Activated CD4-positive, alpha-beta T cell treated with anti-CD3 and anti-CD28 coated beads for 36 hours (primary cell): ENCODE measurements at regions of chr2 and their contacts with region 1.

Region 1: DNA sequence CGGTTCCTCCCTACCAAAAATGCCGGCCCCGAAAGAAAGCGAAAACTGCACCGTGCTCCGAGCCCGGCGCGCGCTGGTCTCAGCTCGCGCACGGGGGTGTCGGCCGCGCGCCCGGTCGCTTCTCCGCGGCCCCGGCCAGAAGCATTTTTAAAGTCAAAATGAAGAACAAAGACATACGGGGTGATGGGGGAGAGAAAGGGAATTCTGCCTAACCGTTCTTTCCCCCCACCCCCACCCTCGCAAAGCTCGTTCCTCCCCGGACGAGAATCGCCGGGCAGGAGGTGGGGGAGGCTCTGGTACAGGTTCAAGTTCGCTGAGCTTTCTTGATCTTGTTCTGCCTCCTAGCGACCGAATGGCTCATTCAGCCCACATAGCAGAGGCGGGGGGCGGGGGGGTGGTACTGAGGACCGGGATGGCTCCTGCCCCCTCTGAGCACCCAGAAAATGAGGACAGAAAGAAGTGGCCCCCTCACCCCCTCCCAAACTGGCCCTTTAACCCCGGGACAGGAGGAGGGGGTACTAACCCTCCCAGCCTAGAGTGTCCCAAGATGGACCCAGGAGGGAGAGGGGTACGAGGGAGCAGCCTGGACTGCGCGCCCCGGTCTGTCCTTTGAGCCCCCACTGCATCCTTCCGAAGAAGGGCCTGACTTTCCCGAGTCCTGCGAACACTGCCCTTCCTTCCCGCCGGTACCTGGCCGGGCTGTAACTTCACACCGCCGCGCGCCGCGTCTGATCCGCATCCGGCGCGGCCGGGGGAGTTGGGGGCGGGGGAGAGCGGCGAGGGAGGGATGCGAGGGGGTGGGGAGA is 3.1 kb downstream of the BCL11A start:
- DNase-seq: peak; percentile 77
- ATAC-seq: peak; percentile 67
- H3K4me3 Mint-ChIP-seq: peak overlapping the region; percentile 81
- H3K27ac Mint-ChIP-seq: peak overlapping the region; percentile 72
- H3K4me1 Mint-ChIP-seq: peaks cover 33% of the 10 kb centered on the region
- H3K27me3 Mint-ChIP-seq: peaks cover 47% of the 10 kb centered on the region

Region 2: DNA sequence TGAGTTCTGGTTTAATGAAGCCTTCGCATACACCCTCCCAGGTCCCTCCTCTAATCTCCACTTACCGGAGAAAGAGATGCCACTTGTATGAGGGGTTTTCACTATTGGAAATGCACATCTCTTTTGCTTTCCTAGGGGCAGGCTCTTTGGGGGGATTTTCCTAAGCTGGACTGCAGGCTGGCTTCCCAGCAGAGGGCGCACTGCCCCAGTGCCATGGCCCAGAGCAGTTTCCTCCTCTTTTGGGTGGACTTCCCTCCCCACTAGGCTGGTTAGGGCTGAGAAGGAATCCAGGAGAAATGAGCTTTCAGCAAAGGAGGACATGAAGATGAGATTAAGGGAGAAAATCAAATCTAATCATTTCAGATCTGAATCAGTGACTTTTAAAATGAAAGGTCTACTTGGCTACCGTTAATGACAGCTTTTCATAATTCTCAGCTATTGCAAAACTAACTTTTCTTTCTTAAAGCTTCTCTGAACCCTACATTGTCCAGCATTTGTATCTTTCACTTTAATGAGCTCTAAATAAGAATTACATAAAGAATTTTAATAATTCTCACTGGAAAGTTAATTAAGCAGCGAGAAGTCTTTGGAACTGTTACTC is 1525.1 kb before region 1 on chr2:
- CTCF ChIA-PET with region 1: interaction called, 3 read pairs
- POLR2A ChIA-PET with region 1: no interaction called
- intact Hi-C with region 1: loop called in 1 of 2 experiments (anchors 10 kb)
- DNase-seq: peak; percentile 44
- ATAC-seq: no peak
- H3K4me3 Mint-ChIP-seq: no peak overlapping the region
- H3K27ac Mint-ChIP-seq: no peak overlapping the region
- H3K4me1 Mint-ChIP-seq: no peaks in the 10 kb centered on the region
- H3K27me3 Mint-ChIP-seq: no peaks in the 10 kb centered on the region

Region 3: GRCh38 chr2:59301466-59302402 is 1248.6 kb before region 1 on chr2:
- CTCF ChIA-PET with region 1: no interaction called
- POLR2A ChIA-PET with region 1: no interaction called
- intact Hi-C with region 1: loop called (anchors 1 to 5 kb)
- DNase-seq: peak; percentile 7
- ATAC-seq: peak; percentile 42
- H3K4me3 Mint-ChIP-seq: no peak overlapping the region
- H3K27ac Mint-ChIP-seq: no peak overlapping the region
- H3K4me1 Mint-ChIP-seq: no peaks in the 10 kb centered on the region
- H3K27me3 Mint-ChIP-seq: no peaks in the 10 kb centered on the region

Region 4: DNA sequence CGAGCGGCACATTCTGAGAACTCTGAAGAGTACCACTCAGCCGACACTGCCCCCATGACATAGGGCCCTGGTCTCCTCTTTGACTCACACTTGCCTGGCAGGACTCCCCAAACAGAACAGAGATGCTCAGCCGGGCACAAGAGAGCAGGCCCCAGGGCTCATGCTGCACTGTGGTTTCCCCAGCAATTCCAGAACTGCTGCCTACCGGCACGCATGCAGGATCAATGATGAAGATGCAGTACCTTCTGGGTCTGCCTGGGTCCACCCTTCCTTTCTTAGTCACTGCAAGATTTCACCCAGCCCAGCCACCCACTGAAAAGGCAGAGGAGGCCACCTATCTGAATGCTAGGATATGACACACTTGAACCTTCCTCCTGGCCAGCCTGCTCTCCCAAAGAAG is 46.3 kb before region 1 on chr2:
- CTCF ChIA-PET with region 1: no interaction called
- POLR2A ChIA-PET with region 1: no interaction called
- intact Hi-C with region 1: no loop called
- DNase-seq: no peak
- ATAC-seq: no peak
- H3K4me3 Mint-ChIP-seq: no peak overlapping the region
- H3K27ac Mint-ChIP-seq: no peak overlapping the region
- H3K4me1 Mint-ChIP-seq: no peaks in the 10 kb centered on the region
- H3K27me3 Mint-ChIP-seq: no peaks in the 10 kb centered on the region